GM18951 (cell line): ENCODE measurements at regions of chr12 and their contacts with region 1.

Region 1: GRCh38 chr12:85016423-85016822 is 19.7 kb downstream of the TSPAN19 start:
- POLR2A ChIP-seq: no peak

Region 2: DNA sequence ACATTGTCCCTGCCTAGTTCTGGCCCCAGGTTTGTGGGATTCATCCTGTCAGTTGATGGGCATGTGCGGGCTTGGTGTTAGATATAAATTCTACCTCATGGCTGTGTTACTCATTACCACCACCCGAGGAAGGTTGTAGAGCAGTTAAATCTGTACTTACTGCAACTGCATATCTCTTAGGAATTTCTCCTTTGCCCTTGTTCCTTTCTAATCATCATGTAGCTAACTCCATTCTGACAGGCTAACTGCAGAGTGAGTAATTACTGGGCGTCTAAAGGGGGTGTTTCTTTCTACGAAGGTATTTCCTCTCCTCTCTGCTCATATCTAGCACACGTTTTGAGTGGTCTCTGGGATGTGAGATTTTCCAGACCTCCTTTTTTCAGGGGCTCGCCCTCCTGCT is 1253.0 kb before region 1 on chr12:
- in situ Hi-C with region 1: no loop called
- POLR2A ChIP-seq: no peak

Region 3: GRCh38 chr12:84450475-84450874 is 565.9 kb before region 1 on chr12:
- in situ Hi-C with region 1: no loop called
- POLR2A ChIP-seq: no peak

Region 4: DNA sequence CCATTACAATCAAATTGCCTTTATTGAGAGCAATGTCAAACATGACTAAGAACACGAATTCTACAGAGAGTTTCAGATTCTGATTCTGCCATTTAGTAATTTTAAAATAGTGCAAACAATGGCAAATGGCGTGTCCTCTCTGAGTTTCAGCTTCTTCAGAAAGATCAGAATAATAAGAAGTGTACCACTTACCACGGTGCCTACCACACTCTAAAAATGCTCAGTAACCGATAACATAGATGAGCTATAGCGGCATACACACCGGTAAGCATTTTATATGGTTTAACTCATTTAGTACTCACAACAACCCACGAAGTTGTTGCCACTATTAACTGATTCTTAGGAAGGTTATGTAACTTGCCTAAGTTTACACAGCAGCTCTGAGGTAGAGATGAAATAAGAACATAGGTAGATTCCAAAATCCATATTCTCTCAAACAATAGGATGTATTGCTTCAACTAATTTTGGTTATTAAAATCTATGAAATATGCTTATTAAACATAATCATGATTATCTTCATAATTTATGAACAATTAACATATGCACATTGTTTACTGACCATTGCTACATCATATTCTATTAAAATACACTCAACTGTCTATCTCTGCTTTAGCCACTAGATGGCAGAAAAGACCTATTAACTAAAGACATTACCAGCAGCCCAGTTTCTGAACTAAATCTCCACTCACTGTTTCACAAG is 142.1 kb before region 1 on chr12:
- in situ Hi-C with region 1: loop called (anchors 10 kb)
- POLR2A ChIP-seq: no peak

Region 5: DNA sequence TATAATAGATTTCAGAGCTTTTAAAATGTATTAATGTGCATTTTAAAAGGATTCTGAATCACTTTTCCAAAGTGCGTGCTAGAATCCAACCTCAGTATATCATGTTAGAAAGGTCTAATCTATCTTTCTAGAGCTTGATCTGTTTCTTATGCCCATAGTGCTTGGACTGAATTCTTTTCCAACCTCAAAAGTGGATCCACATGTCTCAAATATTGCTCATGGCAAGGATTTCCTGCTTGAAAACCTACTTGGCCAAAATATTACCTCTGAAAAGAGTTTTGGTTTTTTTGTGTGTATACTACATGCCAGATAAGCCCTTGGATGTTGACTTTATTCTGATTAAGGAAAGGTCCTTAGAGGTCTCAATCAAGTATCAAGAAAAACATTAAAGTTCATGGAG is 86.9 kb before region 1 on chr12:
- in situ Hi-C with region 1: no loop called
- POLR2A ChIP-seq: no peak

Region 6: DNA sequence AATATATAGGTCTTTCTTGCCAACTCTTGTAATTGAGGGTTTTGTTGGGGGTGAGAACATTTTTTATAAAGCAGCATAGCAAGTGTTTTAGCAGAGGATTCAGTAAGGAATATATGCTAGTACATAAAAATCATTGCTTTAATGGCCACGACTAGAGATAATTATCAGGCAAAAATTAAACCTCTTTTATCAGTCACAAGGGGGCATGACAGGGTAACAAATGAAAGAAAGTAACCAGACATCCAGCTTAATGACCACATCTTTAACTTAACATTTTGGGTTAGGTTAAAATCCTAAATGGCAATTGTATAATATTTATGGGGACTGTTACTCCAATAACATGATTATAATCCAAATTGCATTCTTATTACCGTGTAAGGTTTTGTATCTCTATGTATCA is 139.4 kb after region 1 on chr12:
- in situ Hi-C with region 1: no loop called
- POLR2A ChIP-seq: no peak